Cardiac septum (tissue), 1 donor: ENCODE measurements at regions of chr17 and their contacts with region 1.

Region 1: DNA sequence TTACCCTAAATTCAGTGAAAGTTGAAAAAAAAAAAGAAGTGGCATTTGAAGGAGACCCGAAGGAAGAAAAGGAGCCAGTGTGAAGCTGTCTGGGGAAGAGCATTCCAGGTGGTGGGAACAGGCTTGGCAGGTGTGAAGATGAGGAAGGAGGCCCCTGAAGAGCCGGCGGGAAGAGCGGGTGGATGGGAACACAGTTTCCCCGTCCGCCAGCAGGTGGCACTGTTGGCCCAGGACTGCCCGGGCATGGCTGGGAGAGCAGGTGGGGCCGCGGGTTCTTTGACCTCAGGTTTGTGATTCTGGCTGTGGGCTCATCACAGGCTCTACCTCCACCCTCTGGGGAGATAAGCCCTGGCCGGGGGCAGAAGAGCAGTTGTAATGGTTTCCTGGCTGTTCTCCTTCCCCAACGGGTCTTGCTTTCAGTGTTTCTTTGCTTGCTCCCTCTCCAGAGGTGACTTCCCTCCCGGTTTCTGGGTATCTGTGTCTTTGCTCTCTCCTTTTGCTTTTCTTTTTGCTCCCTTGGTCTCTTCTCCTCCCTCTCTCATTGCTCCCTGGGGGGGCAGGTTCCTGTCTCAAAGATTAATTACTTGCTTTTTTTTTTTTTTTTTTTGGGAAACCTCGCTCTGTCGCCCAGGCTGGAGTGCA is 32.3 kb downstream of the RAP1GAP2 start:
- DNase-seq: peak; percentile 90

Region 2: GRCh38 chr17:2929881-2930533 is 101.5 kb after region 1 on chr17:
- intact Hi-C with region 1: loop called (anchors 5 kb)
- DNase-seq: no peak

Region 3: DNA sequence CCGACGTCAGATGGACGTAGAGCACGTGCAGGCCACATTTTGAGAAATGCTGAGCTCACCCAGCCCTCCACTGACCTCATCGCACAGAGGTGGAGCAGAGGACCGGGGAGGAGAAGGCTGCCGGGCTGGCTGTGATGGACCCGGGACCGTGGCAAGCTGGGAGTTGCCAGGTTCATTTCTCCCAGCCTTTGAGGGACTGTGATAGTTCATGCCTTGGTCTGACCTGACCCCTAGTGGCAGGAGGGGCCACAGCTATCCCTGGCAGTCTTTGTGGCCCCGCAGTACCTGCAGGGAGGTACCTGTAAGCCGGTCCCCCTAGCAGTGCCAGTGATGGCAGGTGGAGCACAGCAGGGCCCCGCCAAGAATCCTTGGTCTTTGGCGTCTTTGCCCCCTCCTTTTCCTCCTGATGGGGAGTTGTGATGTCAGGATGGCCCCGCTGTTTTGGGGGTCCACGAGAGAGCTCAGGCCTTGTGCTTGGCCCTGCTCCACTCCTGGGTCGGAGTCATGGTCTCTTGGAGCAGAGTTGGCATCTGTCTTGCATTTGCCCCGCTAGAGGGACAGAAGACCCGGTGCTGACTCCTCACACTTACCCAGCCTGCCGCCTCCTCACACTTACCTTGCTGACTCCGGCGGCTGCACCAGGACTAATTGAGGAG is 184.5 kb after region 1 on chr17:
- intact Hi-C with region 1: loop called (anchors 1 kb)
- DNase-seq: peak; percentile 81